Breast epithelium (tissue), 4 donors: ENCODE measurements at regions of chr9 and their contacts with region 1.

Region 1: DNA sequence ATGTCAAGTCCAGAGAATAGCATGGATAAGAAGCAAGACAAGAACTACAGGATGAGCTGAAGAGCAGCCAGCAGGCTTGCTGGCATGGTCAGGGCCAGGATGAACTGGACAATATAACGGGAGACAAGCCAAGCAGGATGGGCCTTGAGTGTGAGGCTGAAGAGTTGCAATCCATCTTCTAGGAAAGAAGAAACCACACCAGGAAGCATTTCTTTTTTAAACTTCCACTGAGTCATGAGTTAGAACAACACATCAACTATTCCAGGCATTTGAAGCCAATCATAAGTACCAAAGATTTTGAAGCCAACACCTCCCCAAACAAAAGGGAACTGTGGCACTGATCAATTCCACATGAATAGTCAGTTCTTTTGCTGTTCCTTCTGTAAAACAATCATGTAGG is 27.3 kb downstream of the SLC31A2 start:
- DNase-seq: no peak
- H3K4me3 ChIP-seq: no peak overlapping the region
- H3K27ac ChIP-seq: no peak overlapping the region
- H3K4me1 ChIP-seq: no peaks in the 10 kb centered on the region
- H3K27me3 ChIP-seq: no peaks in the 10 kb centered on the region
- CTCF ChIP-seq: no peak
- POLR2A ChIP-seq: no peak

Region 2: DNA sequence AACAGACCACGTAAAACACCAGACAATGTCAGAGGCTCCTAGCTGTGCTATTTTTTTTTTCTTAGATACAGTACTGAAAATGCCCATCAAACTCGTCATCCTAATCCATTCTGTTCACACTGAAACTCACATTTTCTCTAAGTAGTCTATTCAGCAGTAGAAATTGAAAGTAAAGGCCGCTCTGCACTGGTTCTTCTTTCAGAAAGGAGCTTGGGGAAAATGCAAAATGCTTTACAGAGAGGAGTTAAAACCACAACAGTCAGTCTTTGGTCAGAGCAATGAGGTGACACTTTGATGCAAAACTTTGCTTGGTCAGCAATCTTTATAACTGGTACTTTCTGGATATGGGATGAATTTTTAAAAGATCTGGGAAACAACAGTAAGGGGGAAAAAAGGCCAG is 959.2 kb before region 1 on chr9:
- intact Hi-C with region 1: loop called (anchors 10 kb)
- DNase-seq: no peak
- H3K4me3 ChIP-seq: no peak overlapping the region
- H3K27ac ChIP-seq: no peak overlapping the region
- H3K4me1 ChIP-seq: no peaks in the 10 kb centered on the region
- H3K27me3 ChIP-seq: no peaks in the 10 kb centered on the region
- CTCF ChIP-seq: no peak
- POLR2A ChIP-seq: no peak